Sigmoid colon (tissue), 7 donors: ENCODE measurements at regions of chr2 and their contacts with region 1.

Region 1: DNA sequence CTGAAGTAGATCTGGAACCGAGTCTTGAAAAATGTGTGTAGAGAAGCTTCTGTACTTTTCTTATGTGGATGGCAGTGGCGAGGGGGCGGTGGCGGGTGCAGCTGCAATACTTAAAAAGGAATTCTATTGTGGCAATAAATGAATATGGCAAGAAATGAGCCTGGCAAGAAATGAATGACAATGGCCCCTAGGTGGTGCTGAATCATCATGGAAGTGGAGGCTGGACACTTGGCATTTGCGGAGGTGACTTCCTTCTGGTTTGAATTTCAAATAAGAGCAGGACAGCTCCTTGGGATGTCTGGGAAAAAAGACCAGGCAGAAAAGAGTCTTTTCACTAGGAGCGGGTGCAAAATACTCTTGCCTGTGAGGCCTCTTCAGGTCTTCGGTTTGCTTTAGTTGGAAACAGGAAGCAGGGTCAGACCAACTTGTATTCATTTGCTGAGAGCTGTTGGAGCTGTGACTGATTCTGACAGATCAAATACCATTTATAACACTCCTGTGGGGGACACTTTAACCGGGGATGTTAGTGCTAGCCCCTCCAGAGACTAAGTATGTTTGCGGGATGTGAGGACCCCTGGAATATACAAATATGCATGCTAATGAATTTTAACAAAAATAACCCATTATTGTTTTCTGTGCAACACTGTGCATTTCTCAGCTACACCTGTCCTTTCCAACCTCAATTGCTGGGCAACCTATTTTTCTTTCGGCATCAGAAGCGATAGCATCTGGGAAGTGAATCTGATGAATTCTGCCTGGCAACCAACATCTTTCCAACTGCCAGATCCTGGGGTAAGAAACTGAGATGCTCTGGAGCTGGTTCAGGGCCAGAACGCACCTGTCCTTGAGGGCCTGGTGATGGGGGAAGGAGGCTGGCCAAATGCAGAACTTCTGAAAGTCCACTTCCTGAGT is 35.4 kb downstream of the FASTKD2 start:
- DNase-seq: peak; percentile 83
- H3K4me3 ChIP-seq: no peak overlapping the region
- H3K27ac ChIP-seq: peak overlapping the region in 2 of 4 donors; percentile 4 to 44
- H3K4me1 ChIP-seq: peaks cover 0 to 15% (median 8%) of the 10 kb centered on the region in 4 donors
- H3K27me3 ChIP-seq: no peaks in the 10 kb centered on the region
- CTCF ChIP-seq: peak; percentile 40 to 66 (median 56)
- EP300 ChIP-seq: no peak
- POLR2A ChIP-seq: no peak

Region 2: GRCh38 chr2:206670531-206671319 is 130.0 kb before region 1 on chr2:
- intact Hi-C with region 1: no loop called
- DNase-seq: no peak
- H3K4me3 ChIP-seq: no peak overlapping the region
- H3K27ac ChIP-seq: no peak overlapping the region
- H3K4me1 ChIP-seq: no peaks in the 10 kb centered on the region
- H3K27me3 ChIP-seq: no peaks in the 10 kb centered on the region
- CTCF ChIP-seq: no peak
- EP300 ChIP-seq: no peak
- POLR2A ChIP-seq: no peak

Region 3: DNA sequence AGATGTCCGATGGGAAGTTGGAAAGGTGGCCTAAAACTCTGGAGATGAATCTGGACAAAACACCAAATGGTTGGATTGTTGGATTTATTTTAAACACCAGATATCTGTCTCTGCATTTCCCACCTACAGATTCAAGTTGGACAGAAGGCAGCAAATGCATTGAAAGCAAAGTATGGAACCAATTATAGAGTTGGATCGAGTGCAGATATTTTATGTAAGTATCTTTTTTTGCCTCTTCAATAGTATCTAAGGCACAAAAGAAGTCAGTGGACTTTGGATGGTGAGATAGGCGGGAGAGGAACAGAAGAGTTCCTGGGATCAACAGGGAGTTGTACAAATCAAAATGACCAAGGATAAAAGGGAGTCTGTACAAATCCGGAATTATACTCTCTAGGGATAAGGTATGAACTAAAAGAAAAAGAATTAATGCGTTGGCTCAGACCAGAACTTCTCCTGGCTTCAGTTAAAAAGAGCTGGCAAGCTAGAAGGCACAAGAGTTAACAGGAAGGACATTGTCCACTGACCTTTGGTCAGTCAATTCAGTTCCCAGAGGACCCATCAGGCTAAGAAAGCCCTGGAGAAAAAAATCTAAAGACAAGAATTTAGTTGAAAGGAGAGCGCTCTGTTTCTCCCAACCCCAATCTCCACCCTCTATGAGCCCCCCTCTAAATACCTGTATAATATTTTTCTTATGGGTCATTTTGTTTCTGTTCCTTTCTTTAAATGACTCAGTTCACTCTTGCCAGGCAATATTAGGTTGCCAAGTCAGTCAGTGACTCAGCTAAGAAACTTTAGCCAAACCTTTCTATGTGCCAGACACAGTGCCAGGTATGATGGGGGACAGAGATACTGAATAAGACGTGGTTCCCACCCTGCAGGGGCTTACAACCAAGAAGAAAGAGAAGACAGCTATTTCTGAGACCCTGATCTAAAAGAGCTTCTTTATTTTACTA is 167.6 kb after region 1 on chr2:
- intact Hi-C with region 1: loop called (anchors 5 kb)
- DNase-seq: no peak
- H3K4me3 ChIP-seq: no peak overlapping the region
- H3K27ac ChIP-seq: no peak overlapping the region
- H3K4me1 ChIP-seq: peaks cover 0 to 6% (median 5%) of the 10 kb centered on the region in 4 donors
- H3K27me3 ChIP-seq: no peaks in the 10 kb centered on the region
- CTCF ChIP-seq: no peak
- EP300 ChIP-seq: no peak
- POLR2A ChIP-seq: no peak

Region 4: DNA sequence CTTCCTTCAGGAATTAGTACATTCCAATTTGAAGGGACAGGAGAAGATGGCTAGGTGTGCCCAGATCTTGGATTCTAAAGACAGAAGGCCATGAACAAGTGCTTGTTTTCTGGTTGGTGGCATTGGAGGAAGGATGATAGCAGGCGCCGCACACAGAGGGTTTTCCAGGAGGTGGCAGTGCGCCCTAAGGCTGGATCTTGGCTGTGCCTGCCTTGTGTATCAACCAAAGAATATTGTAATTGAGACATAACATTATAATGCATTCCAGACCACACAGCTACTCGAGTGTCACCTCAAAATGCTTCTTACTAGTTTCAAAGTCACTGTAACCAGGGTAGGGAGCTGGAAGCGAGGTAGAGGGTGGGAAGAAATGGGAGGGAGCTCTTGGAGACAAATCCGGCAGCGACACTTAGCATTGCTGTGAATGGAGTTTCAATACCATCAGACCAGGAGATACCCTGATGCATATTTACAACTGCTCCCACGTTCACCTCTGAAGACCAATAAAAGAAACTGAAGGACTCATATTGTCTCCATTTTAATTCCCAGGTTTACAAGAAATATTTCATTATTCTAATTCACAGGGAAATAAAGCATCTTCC is 181.1 kb after region 1 on chr2:
- intact Hi-C with region 1: loop called (anchors 5 kb)
- DNase-seq: peak; percentile 88
- H3K4me3 ChIP-seq: no peak overlapping the region
- H3K27ac ChIP-seq: peak overlapping the region in 1 of 4 donors; percentile 32
- H3K4me1 ChIP-seq: peaks cover 0 to 32% (median 18%) of the 10 kb centered on the region in 4 donors
- H3K27me3 ChIP-seq: no peaks in the 10 kb centered on the region
- CTCF ChIP-seq: peak; percentile 60 to 85 (median 82)
- EP300 ChIP-seq: peak in 1 of 4 donors; percentile 9
- POLR2A ChIP-seq: no peak

Region 5: GRCh38 chr2:207341804-207342203 is 541.0 kb after region 1 on chr2:
- intact Hi-C with region 1: loop called (anchors 10 kb)
- DNase-seq: no peak
- H3K4me3 ChIP-seq: no peak overlapping the region
- H3K27ac ChIP-seq: no peak overlapping the region
- H3K4me1 ChIP-seq: no peaks in the 10 kb centered on the region
- H3K27me3 ChIP-seq: no peaks in the 10 kb centered on the region
- CTCF ChIP-seq: no peak
- EP300 ChIP-seq: no peak
- POLR2A ChIP-seq: no peak